B cell (primary cell): ENCODE measurements at regions of chr17 and their contacts with region 1.

Region 1: GRCh38 chr17:69235338-69235930 is 6.8 kb upstream of the ABCA10 start:
- DNase-seq: peak; percentile 81
- ATAC-seq: peak; percentile 87
- H3K4me3 ChIP-seq: no peak overlapping the region
- H3K4me3 Mint-ChIP-seq: no peak overlapping the region
- H3K27ac ChIP-seq: no peak overlapping the region
- H3K27ac Mint-ChIP-seq: no peak overlapping the region
- H3K4me1 ChIP-seq: peaks cover 0 to 4% of the 10 kb centered on the region in 2 donors
- H3K4me1 Mint-ChIP-seq: peaks cover 4% of the 10 kb centered on the region
- H3K27me3 ChIP-seq: no peaks in the 10 kb centered on the region
- H3K27me3 Mint-ChIP-seq: no peaks in the 10 kb centered on the region
- CTCF ChIP-seq: peak; percentile 89

Region 2: GRCh38 chr17:68539548-68540467 is 695.6 kb before region 1 on chr17:
- CTCF ChIA-PET with region 1: no interaction called
- POLR2A ChIA-PET with region 1: no interaction called
- intact Hi-C with region 1: loop called (anchors 5 kb)
- DNase-seq: peak; percentile 41
- ATAC-seq: peak; percentile 56
- H3K4me3 ChIP-seq: no peak overlapping the region
- H3K4me3 Mint-ChIP-seq: peak overlapping the region; percentile 42
- H3K27ac ChIP-seq: peak overlapping the region in 1 of 2 donors; percentile 10
- H3K27ac Mint-ChIP-seq: peak overlapping the region; percentile 76
- H3K4me1 ChIP-seq: peaks cover 0 to 15% of the 10 kb centered on the region in 2 donors
- H3K4me1 Mint-ChIP-seq: peaks cover 16% of the 10 kb centered on the region
- H3K27me3 ChIP-seq: no peaks in the 10 kb centered on the region
- H3K27me3 Mint-ChIP-seq: no peaks in the 10 kb centered on the region
- CTCF ChIP-seq: peak; percentile 29

Region 3: DNA sequence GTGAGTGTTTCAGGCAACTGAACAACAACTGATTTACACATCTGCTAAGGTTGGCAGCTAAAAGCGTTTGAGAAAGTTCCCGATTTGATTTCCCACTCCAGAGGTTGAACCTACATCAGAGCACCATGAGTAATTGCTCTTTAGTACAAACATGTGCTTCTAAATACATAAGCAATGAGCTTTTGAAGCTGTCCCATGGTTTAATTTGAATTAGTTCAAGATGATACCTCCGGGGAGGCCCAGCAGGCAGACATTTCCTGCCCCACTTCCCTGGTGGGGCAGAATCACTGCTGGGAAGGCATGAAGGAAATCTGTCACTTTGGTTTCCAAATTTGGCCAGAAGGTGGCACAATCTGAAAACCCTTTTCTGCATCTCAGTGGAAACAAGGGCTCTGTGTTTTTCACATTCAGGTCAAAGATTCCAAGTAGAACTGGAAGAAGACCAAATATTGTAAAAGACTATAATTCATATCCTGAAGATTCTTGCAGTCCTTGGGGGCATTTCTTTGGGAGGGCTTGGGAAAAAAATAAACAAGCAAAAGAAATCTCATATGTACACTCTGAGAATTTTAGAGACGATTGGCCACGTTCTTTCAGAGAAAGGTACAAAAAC is 458.1 kb before region 1 on chr17:
- CTCF ChIA-PET with region 1: interaction called, 64 read pairs
- POLR2A ChIA-PET with region 1: no interaction called
- intact Hi-C with region 1: loop called (anchors 1 kb)
- DNase-seq: peak; percentile 60
- ATAC-seq: no peak
- H3K4me3 ChIP-seq: no peak overlapping the region
- H3K4me3 Mint-ChIP-seq: no peak overlapping the region
- H3K27ac ChIP-seq: no peak overlapping the region
- H3K27ac Mint-ChIP-seq: no peak overlapping the region
- H3K4me1 ChIP-seq: no peaks in the 10 kb centered on the region
- H3K4me1 Mint-ChIP-seq: peaks cover 14% of the 10 kb centered on the region
- H3K27me3 ChIP-seq: no peaks in the 10 kb centered on the region
- H3K27me3 Mint-ChIP-seq: no peaks in the 10 kb centered on the region
- CTCF ChIP-seq: peak; percentile 74

Region 4: DNA sequence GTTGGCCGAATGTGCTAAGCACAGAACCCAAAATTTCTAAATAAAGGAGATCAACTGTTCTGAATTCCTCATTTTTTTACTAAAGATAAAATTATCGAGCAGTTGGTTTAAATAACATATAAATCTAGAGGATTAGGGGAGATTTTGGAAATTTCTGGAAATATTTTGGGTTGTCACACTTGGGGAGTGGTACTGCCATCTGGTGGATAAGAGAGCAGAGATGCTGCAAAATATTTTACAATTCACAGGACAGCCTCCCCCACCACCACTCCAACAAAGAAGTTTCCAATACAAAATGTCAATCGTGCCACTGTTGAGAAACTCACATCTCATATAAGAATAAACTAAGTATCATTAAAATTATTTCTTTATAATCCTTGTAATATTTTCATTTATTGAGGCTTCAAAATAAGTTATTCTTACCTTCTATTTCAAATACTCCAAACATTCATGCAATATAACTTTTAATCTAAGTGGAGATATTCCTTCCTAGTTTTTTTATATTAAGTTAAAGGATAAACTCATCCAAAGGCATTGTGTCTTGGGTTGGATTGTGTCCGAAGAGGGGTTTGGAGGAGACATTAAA is 263.2 kb before region 1 on chr17:
- CTCF ChIA-PET with region 1: interaction called, 3 read pairs
- POLR2A ChIA-PET with region 1: no interaction called
- intact Hi-C with region 1: loop called (anchors 10 kb)
- DNase-seq: no peak
- ATAC-seq: no peak
- H3K4me3 ChIP-seq: no peak overlapping the region
- H3K4me3 Mint-ChIP-seq: no peak overlapping the region
- H3K27ac ChIP-seq: no peak overlapping the region
- H3K27ac Mint-ChIP-seq: no peak overlapping the region
- H3K4me1 ChIP-seq: peaks cover 0 to 3% of the 10 kb centered on the region in 2 donors
- H3K4me1 Mint-ChIP-seq: peaks cover 4% of the 10 kb centered on the region
- H3K27me3 ChIP-seq: no peaks in the 10 kb centered on the region
- H3K27me3 Mint-ChIP-seq: peaks cover 4% of the 10 kb centered on the region
- CTCF ChIP-seq: peak; percentile 40